PC-3 (cell line): ENCODE measurements at regions of chr7 and their contacts with region 1.

Region 1: GRCh38 chr7:74625446-74625845 is 32.1 kb upstream of the GTF2I start:
- DNase-seq: peak; percentile 55
- ATAC-seq: peak; percentile 50; the same call in 1 of the 2 replicates
- H3K4me3 ChIP-seq: no peak overlapping the region
- H3K27ac ChIP-seq: no peak overlapping the region
- H3K4me1 ChIP-seq: no peaks in the 10 kb centered on the region
- H3K27me3 ChIP-seq: no peaks in the 10 kb centered on the region
- CTCF ChIP-seq: peak; percentile 41; the same call in 1 of the 2 replicates

Region 2: GRCh38 chr7:74051629-74052410 is 573.6 kb before region 1 on chr7:
- CTCF ChIA-PET with region 1: no interaction called
- POLR2A ChIA-PET with region 1: no interaction called
- intact Hi-C with region 1: no loop called
- DNase-seq: peak; percentile 67
- ATAC-seq: peak; percentile 94
- H3K4me3 ChIP-seq: no peak overlapping the region
- H3K27ac ChIP-seq: no peak overlapping the region
- H3K4me1 ChIP-seq: no peaks in the 10 kb centered on the region
- H3K27me3 ChIP-seq: no peaks in the 10 kb centered on the region
- CTCF ChIP-seq: peak; percentile 68

Region 3: GRCh38 chr7:74684921-74685320 is 59.5 kb after region 1 on chr7:
- CTCF ChIA-PET with region 1: no interaction called
- POLR2A ChIA-PET with region 1: no interaction called
- intact Hi-C with region 1: loop called (anchors 10 kb)
- DNase-seq: no peak
- ATAC-seq: no peak
- H3K4me3 ChIP-seq: no peak overlapping the region
- H3K27ac ChIP-seq: no peak overlapping the region
- H3K4me1 ChIP-seq: no peaks in the 10 kb centered on the region
- H3K27me3 ChIP-seq: no peaks in the 10 kb centered on the region
- CTCF ChIP-seq: no peak